Activated CD4-positive, alpha-beta memory T cell treated with anti-CD3 and anti-CD28 coated beads, Interleukin-2, amount 10 ng/mL, durations not matched to agents 7 days and 5 days (primary cell): ENCODE measurements at regions of chr2 and their contacts with region 1.

Region 1: GRCh38 chr2:85354286-85355072 is at the starts of genes ELMOD3 and RETSAT:
- DNase-seq: peak; percentile 98
- H3K4me3 Mint-ChIP-seq: peak within 1 kb of the TSS; percentile 99
- H3K27ac Mint-ChIP-seq: peak within 1 kb of the TSS; percentile 93
- H3K4me1 Mint-ChIP-seq: peaks cover 45% of the 10 kb centered on the region
- H3K27me3 Mint-ChIP-seq: no peaks in the 10 kb centered on the region
- total RNA-seq, gene ELMOD3: 19.2 to 19.4 TPM
- total RNA-seq, gene RETSAT: 30.1 to 31.1 TPM

Region 2: DNA sequence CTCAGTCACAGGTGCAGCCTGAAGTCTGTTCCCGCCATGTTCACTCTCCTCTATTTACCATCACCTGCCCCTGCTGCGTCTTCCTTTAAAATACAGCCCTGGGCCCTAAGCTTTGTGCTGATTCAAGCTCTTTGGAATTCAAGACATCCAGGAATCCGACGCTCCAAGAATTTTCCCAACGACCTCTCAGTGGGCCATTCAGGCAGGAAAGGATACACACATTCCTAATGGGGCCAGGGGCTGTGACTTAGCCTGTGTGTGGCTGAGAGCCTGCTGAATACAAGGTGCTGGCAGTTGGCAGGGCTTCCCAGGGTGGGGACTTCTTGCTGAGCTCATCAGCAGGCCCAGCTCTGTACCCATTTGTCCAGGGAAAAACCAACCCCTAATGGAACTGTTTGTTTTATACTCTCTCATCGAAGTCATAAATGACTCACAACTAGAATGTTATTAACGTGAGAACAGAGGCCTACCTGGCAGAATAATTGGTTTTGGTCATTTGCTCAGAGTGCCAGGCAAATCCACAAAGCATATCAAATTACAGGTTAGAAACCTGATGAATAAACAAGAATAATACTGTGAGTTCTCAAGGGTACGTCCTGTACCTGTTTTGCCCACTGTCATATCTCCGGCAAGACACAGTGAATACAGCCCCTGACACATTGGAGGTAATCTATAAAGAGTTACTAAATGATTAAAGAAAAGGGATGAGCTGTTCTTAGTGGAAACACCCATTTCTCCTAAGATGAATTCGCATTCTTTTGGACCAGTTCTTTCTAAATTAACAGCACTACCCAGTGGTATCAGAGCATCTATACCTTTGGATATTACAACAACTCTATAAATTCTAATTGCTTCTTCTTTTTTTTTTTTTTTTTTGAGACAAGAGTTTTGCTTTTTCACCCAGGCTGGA is 396.1 kb before region 1 on chr2:
- CTCF ChIA-PET with region 1: no interaction called
- POLR2A ChIA-PET with region 1: no interaction called
- DNase-seq: no peak
- H3K4me3 Mint-ChIP-seq: no peak overlapping the region
- H3K27ac Mint-ChIP-seq: no peak overlapping the region
- H3K4me1 Mint-ChIP-seq: peaks cover 18% of the 10 kb centered on the region
- H3K27me3 Mint-ChIP-seq: no peaks in the 10 kb centered on the region

Region 3: GRCh38 chr2:85308896-85309555 is 45.5 kb before region 1 on chr2:
- CTCF ChIA-PET with region 1: no interaction called
- POLR2A ChIA-PET with region 1: interaction called, 13 read pairs
- DNase-seq: no peak
- H3K4me3 Mint-ChIP-seq: no peak overlapping the region
- H3K27ac Mint-ChIP-seq: no peak overlapping the region
- H3K4me1 Mint-ChIP-seq: peaks cover 33% of the 10 kb centered on the region
- H3K27me3 Mint-ChIP-seq: peaks cover 6% of the 10 kb centered on the region

Region 4: GRCh38 chr2:85340034-85340892 is 14.2 kb before region 1 on chr2:
- CTCF ChIA-PET with region 1: interaction called, 5 read pairs
- POLR2A ChIA-PET with region 1: interaction called, 28 read pairs
- DNase-seq: no peak
- H3K4me3 Mint-ChIP-seq: no peak overlapping the region
- H3K27ac Mint-ChIP-seq: no peak overlapping the region
- H3K4me1 Mint-ChIP-seq: no peaks in the 10 kb centered on the region
- H3K27me3 Mint-ChIP-seq: peaks cover 12% of the 10 kb centered on the region

Region 5: GRCh38 chr2:85369500-85369899 is 15.0 kb after region 1 on chr2:
- CTCF ChIA-PET with region 1: interaction called, 3 read pairs
- POLR2A ChIA-PET with region 1: interaction called, 15 read pairs
- DNase-seq: no peak
- H3K4me3 Mint-ChIP-seq: no peak overlapping the region
- H3K27ac Mint-ChIP-seq: no peak overlapping the region
- H3K4me1 Mint-ChIP-seq: no peaks in the 10 kb centered on the region
- H3K27me3 Mint-ChIP-seq: no peaks in the 10 kb centered on the region

Region 6: DNA sequence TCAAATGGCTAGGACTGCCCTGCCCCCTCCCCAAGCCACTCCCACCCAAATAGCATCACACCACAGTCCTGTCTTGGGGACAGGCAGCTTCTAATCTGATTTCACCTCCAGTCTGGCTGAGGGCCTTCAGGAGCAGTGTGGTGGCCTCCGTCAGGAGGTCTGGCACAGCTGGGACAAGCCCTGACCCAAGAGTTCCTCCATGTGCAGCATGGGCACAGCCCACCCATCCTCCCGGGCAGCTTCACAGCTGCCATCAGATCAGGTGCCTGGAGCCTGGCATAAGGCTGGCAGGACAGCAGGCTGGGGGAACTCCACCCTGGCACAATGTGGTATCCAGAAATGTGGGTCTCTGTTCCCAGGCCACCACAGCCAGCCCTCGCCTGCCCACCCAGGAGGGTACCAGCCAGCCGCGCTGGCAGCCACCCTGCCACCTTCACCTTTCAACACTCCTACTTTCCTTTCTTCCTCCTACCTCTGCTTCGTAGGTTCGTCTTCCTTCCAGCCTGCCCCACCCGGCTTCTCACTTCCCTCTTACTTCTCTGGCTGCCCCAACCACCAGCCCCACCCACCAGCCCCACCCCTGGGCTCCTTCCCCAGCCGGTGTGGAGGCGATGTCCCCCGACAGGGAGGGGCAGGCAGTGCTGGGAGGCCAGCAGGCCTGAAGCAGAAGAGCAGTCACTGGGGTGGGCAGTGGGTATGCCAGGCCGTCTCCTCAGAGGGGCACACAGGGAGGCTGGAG is 55.5 kb after region 1 on chr2 and contains the start of gene CAPG:
- CTCF ChIA-PET with region 1: no interaction called
- POLR2A ChIA-PET with region 1: interaction called, 13 read pairs
- DNase-seq: peak; percentile 72
- H3K4me3 Mint-ChIP-seq: peak within 1 kb of the TSS; percentile 78
- H3K27ac Mint-ChIP-seq: peak within 1 kb of the TSS; percentile 73
- H3K4me1 Mint-ChIP-seq: peaks cover 76% of the 10 kb centered on the region
- H3K27me3 Mint-ChIP-seq: peaks cover 3% of the 10 kb centered on the region
- total RNA-seq, gene CAPG: 167 to 177 TPM

Region 7: DNA sequence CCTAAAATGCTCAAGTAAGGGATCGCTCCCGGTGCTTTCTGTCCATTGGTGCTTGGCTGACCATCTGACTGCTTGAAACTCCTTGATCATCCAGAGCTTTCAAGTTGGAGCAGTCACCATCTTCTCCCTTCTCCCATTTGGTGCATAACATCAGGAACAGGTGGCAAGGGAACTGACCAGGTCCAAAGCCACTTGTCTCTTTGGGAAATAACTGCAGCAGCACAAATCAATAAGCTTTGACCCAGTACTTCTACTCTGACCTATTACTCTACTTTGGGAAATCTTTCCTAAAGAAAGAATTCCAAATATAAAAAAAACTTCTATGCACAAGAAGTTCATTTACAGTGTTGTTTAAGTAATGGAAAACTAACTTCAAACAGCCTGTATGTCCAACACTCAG is 173.9 kb after region 1 on chr2:
- CTCF ChIA-PET with region 1: no interaction called
- POLR2A ChIA-PET with region 1: no interaction called
- DNase-seq: no peak
- H3K4me3 Mint-ChIP-seq: no peak overlapping the region
- H3K27ac Mint-ChIP-seq: no peak overlapping the region
- H3K4me1 Mint-ChIP-seq: no peaks in the 10 kb centered on the region
- H3K27me3 Mint-ChIP-seq: peaks cover 32% of the 10 kb centered on the region

Region 8: DNA sequence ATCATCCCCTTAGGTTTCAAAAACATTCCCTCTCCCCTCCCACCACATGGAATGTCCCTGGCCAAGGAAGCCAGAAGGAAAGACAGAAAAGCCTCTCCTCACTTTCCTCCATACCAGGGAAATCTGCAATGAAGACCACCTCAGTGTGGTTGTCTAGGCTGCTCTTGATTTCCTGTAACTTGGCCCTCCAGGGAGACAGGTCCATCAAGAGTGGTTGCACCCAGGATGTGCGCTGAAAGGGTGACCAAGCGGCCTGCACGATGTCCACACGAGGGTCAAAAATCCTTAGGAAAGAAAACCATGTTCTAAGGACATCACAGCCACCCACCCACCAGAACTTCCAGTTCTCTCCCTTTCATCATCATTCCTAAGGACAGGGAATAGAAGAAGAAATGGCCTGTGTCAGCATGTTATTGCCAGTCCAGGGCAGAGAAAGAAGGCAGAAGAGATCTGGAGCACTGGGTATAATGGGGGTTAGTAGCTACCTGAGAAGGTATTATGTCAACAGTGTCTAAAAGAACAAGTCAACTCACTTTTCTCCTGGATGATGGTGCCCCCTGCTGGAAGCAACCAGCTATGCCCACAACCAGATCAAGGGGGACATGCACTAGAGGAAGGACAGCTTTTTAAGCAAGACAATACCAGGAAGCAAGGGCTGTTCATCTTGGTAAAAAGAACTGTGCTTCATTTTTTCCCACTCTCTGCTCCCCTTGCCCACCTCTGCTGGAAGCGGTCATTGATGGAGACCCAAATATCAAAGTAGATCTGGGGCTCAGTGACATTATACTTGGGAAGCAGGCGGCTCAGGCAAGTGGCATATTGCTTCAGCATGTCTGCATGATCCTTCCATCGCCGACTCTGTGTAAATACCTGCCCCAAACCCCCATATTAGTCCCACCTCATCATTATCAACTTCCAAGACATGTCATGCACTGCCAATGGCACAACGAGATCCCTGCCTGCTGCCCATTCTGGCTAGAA is 197.5 kb after region 1 on chr2:
- CTCF ChIA-PET with region 1: interaction called, 10 read pairs
- POLR2A ChIA-PET with region 1: interaction called, 9 read pairs
- DNase-seq: peak; percentile 91
- H3K4me3 Mint-ChIP-seq: no peak overlapping the region
- H3K27ac Mint-ChIP-seq: peak overlapping the region; percentile 7
- H3K4me1 Mint-ChIP-seq: peaks cover 5% of the 10 kb centered on the region
- H3K27me3 Mint-ChIP-seq: no peaks in the 10 kb centered on the region

Region 9: DNA sequence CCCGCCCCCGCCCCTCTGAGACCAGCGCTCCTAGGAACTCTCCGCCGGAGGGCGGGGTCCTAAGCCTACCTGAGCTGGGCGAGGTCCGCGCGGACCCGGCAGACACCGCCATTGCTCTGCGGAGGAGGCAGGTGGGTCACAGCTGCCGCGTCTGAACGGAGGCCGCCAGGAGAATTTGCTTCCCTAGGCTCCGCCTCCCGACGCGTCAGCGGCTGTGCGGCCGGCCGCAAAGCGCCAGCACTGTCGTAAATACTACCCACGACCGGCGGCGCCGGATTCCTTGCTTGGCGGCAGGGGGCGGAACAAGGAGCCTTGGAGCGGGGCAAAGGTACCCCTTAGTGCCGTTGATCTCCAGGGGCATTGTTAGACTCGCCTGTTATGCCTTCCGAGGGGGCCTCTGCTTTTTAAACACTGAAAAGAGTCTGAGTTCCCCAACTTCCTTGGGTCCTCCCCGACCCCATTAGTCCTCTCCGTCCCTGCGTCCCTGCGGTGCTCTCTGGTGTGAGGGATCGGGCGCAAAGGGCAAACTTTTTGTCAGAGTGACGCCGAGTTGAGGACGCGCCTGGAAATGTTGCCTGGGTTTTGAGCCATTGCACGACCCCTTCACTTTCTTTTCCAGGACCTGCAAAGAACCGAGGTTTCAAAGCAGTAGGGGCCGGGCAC is 207.0 kb after region 1 on chr2 and contains the start of gene GGCX:
- CTCF ChIA-PET with region 1: no interaction called
- POLR2A ChIA-PET with region 1: interaction called, 13 read pairs
- DNase-seq: peak; percentile 96
- H3K4me3 Mint-ChIP-seq: peak within 1 kb of the TSS; percentile 87
- H3K27ac Mint-ChIP-seq: peak within 1 kb of the TSS; percentile 90
- H3K4me1 Mint-ChIP-seq: peaks cover 36% of the 10 kb centered on the region
- H3K27me3 Mint-ChIP-seq: no peaks in the 10 kb centered on the region
- total RNA-seq, gene GGCX: 22.5 to 22.8 TPM